ENCODE measurements at regions of chr5 and their contacts with region 1.

Region 1: DNA sequence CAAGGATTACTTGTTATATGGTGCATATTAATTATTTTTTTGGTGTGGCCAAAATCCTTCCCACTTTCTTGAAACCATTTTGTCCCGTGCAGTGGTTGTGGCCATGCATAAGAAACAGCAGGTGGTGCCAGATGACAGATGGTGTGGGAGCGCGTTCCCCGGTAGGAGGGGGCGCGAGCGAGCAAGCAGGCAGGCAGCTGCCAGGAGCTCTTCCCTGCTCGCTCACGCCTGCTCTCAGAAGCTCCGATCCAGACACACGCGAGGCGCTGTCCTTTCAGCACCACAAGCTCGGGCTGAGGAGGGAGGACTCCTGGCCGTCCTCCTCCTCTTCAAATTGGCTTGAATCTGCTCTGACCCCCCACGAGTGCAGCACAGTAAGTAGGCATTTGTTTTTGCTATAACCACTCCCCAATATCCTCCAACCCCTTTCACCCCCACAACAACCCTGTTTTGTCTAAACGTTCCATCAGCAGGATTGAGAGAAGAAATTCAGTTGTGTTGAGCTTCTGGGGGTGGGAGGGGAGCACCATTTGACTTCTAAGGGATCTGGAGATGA is at the start of gene NSG2:
- DNase-seq: peak; percentile 85
- H3K4me3 ChIP-seq: peak within 1 kb of the TSS in 1 of 2 experiments; percentile 47; a peak in 2 of 4 replicates
- H3K27ac ChIP-seq: peak within 1 kb of the TSS in 1 of 2 experiments; percentile 94; a peak in 2 of 4 replicates
- H3K4me1 ChIP-seq: peaks cover 0 to 18% of the 10 kb centered on the region in 2 experiments; a peak in 2 of 4 replicates
- H3K27me3 ChIP-seq: no peaks in the 10 kb centered on the region
- CTCF ChIP-seq: peak; percentile 89
- EP300 ChIP-seq: peak in 1 of 2 experiments; percentile 20; a peak in 1 of 4 replicates
- RAD21 ChIP-seq: peak; percentile 99
- polyA plus RNA-seq, gene NSG2: 4.3 and 10.7 TPM in 2 replicates

Region 2: DNA sequence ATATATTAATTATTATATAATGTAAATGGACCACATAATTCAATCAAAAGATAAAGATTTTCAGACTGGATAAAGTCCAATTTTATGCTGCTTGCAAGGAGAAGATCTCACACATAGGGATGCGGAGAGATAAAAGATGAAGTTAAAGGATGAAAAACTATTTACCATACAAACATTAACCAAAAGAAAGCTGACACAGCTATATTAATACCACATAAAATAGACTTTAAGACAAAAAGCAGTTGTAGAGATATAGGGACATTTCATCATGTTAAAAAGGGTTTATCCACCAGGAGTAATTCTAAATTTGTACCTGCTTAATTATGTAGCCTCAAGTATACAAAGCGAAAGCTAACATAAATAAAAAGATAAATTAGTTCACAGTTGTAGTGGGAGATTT is 15.3 kb before region 1 on chr5:
- CTCF ChIA-PET with region 1: interaction called, 15 read pairs
- POLR2A ChIA-PET with region 1: no interaction called
- DNase-seq: no peak
- H3K4me3 ChIP-seq: no peak overlapping the region
- H3K27ac ChIP-seq: no peak overlapping the region
- H3K4me1 ChIP-seq: no peaks in the 10 kb centered on the region
- H3K27me3 ChIP-seq: no peaks in the 10 kb centered on the region
- CTCF ChIP-seq: no peak
- EP300 ChIP-seq: no peak
- RAD21 ChIP-seq: no peak

Region 3: GRCh38 chr5:174074369-174074768 is 28.8 kb after region 1 on chr5:
- CTCF ChIA-PET with region 1: interaction called, 14 read pairs
- POLR2A ChIA-PET with region 1: interaction called, 5 read pairs
- DNase-seq: no peak
- H3K4me3 ChIP-seq: no peak overlapping the region
- H3K27ac ChIP-seq: peak overlapping the region in 1 of 2 experiments; percentile 35; a peak in 2 of 4 replicates
- H3K4me1 ChIP-seq: peaks cover 0 to 33% of the 10 kb centered on the region in 2 experiments; a peak in 1 of 4 replicates
- H3K27me3 ChIP-seq: no peaks in the 10 kb centered on the region
- CTCF ChIP-seq: no peak
- EP300 ChIP-seq: no peak
- RAD21 ChIP-seq: no peak

Region 4: DNA sequence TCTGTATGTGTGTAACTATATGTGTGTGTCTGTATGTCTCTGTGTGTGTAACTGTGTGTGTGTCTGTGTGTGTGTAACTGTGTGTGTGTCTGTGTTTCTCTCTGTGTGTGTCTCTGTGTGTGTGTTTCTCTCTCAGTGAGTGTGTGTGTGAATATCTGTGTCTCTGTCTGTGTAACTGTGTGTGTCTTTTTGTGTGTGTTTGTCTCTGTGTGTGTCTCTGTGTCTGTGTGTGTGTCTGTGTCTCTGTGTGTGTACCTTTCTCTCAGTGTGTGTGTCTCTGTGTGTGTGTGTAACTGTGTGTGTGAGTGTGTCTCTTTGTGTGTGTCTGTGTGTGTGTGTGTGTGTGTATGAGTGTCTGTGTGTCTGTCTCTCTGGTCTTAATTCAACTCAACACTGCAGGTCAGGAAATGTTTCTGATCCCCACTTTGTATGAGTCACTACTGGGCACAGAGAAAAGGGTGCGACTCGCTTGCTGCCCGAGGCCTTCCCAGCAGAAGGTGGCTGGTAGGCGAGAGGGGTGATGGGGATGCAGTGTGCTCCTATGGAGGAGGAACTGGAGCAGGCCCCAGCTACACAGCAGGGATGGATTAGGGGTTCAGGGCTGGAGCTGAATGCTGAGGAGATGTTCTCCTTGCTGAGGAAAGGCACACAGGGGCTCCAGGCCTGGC is 52.1 kb after region 1 on chr5:
- CTCF ChIA-PET with region 1: interaction called, 10 read pairs
- POLR2A ChIA-PET with region 1: no interaction called
- DNase-seq: no peak
- H3K4me3 ChIP-seq: no peak overlapping the region
- H3K27ac ChIP-seq: peak overlapping the region in 1 of 2 experiments; percentile 1; a peak in 1 of 4 replicates
- H3K4me1 ChIP-seq: peaks cover 0 to 59% of the 10 kb centered on the region in 2 experiments; a peak in 2 of 4 replicates
- H3K27me3 ChIP-seq: no peaks in the 10 kb centered on the region
- CTCF ChIP-seq: no peak
- EP300 ChIP-seq: no peak
- RAD21 ChIP-seq: no peak

Region 5: DNA sequence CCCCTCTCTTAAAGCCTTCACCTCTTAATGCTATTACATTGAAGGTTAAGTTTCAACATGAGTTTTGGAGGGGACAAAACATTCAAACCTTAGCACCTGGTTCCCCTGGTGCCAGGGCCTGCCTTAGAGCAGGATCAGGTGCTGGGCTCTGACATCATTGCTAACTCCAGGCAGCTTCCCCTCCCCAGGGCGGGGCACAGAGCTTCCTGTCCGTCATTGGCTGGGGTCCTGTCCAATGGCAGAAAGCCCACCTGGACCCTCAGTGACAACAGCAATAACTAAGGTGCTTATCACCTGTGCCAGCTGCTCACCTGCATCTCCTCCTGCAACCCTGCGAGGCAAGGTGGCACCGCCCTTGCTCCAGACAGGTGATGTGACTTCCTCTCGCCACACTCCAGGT is 177.3 kb after region 1 on chr5:
- CTCF ChIA-PET with region 1: interaction called, 20 read pairs
- POLR2A ChIA-PET with region 1: no interaction called
- DNase-seq: no peak
- H3K4me3 ChIP-seq: no peak overlapping the region; a peak in 1 of 4 replicates
- H3K27ac ChIP-seq: peak overlapping the region in 1 of 2 experiments; percentile 96; a peak in 2 of 4 replicates
- H3K4me1 ChIP-seq: peaks cover 0 to 43% of the 10 kb centered on the region in 2 experiments; a peak in 2 of 4 replicates
- H3K27me3 ChIP-seq: no peaks in the 10 kb centered on the region
- CTCF ChIP-seq: no peak
- EP300 ChIP-seq: no peak
- RAD21 ChIP-seq: no peak

Region 6: DNA sequence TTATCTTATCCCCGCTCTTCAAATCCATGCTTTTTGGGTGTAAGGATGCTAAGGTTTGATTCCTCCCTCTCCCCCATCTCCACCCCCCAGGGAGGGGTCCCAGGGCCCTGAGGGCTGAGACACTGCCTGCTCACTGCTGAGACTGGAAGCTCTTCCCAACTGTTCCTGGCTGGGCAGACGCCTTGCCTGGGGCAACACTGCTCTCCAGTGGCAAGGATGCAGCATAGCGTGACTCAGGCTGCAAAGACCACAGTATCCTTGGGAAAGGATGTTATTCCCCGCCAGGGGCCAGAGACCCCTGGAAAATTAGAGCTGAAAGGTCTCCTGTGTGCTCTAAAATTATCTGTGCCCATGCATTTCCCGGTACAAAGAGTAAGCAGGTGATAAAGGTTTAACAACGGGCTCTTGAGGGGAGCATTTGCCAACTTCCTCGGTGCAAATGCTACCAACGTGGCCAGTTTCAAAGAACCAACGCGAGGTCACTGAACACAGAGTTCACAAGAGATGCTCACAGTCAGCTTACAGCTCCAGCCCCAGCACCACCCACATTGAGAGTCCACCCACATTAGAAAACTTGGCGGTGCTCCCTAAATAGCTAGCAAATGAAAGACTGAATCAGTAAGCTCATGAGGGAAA is 271.8 kb after region 1 on chr5:
- CTCF ChIA-PET with region 1: interaction called, 298 read pairs
- POLR2A ChIA-PET with region 1: interaction called, 54 read pairs
- DNase-seq: peak; percentile 84
- H3K4me3 ChIP-seq: peak overlapping the region in 1 of 2 experiments; percentile 33; a peak in 1 of 4 replicates
- H3K27ac ChIP-seq: no peak overlapping the region
- H3K4me1 ChIP-seq: peaks cover 0 to 12% of the 10 kb centered on the region in 2 experiments; a peak in 1 of 4 replicates
- H3K27me3 ChIP-seq: no peaks in the 10 kb centered on the region; the same call in 1 of the 2 replicates
- CTCF ChIP-seq: peak; percentile 85
- EP300 ChIP-seq: 0 out of 4 replicates have a peak, but pooled peaks of 1 of the 2 experiments have one; percentile 7
- RAD21 ChIP-seq: peak; percentile 99

Measured in SK-N-SH (cell line).